GM18951 (cell line): ENCODE measurements at regions of chr5 and their contacts with region 1.

Region 1: DNA sequence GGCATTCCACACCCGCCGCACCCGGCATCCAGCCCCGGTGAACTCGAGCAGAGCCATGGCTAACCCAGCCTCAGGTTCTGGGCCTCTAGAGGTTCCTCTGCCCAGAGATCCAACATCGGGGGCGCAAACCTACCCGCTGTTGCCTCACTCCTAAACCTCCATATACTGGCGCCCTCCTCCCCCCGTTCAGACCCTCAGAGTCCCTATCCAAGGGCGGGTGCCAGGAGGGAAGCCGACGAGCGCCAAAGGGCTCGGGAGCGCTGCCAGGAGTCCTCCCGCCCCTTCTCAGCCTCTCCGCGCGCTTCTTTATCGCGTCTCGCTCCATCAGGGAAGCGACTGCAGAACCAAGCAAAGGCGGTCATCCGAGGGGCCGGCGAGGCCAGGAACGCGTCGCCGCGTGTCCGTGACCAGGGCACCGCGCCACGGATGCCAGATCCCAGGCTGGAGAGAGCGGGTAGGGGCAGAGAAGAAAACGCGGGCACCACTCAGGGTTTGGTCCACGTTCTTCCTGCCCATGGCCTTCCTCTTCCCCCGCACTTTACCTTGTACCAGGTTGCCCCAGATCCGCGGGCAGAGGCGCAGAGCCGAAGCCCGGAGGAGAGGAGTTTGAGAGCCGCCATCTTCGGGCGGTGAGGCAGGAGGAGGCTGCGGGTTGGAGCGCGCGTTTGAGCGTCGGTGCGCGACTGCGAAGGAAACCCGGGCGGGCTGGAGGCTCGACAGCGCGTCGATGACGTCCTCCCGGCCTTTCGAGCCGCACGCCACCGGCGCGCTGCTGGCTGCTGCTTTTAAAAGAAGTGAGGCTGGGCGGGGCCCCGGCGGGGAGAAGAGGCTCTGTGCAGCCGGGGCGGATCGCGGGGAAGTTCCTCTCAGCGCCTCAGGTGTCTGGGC is at the start of gene OXCT1:
- POLR2A ChIP-seq: peak; percentile 94

Region 2: GRCh38 chr5:41748631-41749030 is 121.4 kb before region 1 on chr5:
- in situ Hi-C with region 1: no loop called
- POLR2A ChIP-seq: no peak

Region 3: DNA sequence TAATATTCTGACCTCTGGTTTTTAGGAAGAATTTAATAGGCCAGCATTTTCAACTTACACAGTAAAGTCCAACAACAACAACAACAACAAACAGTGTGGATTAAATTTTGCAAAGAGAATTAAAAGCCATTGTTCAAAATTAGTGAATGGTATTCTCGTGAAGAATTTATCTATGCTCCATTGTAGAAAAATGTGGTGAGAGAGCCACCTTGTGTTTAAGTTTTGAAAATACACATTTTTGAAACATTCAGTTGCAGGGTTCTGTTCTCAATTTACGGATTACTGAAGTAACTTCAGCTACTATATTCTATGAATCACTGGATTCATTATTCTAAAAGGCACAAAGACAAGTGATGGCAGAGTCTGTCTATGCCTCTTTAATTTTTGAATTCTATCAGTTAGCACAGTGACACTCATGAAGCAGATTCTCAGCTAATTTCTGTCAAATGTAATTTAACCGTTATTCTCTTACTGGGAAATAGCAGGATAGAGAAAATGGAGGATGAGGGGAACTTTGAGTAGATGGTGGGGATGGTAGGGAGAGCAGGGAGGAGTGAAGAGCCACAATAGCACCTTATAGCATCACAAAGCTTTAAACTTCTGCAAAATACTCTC is 897.6 kb after region 1 on chr5:
- in situ Hi-C with region 1: loop called (anchors 25 kb)
- POLR2A ChIP-seq: no peak